K562 (cell line): ENCODE measurements at regions of chr6 and their contacts with region 1.

Region 1: GRCh38 chr6:16128759-16129622 is at the start of gene MYLIP:
- DNase-seq: peak; percentile 99 to 100 (median 100)
- ATAC-seq: peak; percentile 92
- H3K4me3 ChIP-seq: peak within 1 kb of the TSS; percentile 90
- H3K27ac ChIP-seq: peak within 1 kb of the TSS; percentile 92
- H3K4me1 ChIP-seq: peaks cover 20 to 21% of the 10 kb centered on the region in 2 experiments
- H3K27me3 ChIP-seq: no peaks in the 10 kb centered on the region
- CTCF ChIP-seq: peak; percentile 94 to 99 (median 99)
- EP300 ChIP-seq: peak; percentile 50
- POLR2A ChIP-seq: peak; percentile 99
- RAD21 ChIP-seq: peak; percentile 99 to 100
- polyA plus RNA-seq, gene MYLIP: 10.8 to 12.9 TPM

Region 2: GRCh38 chr6:15754035-15754705 is 374.8 kb before region 1 on chr6:
- CTCF ChIA-PET with region 1: interaction called, 3 read pairs
- POLR2A ChIA-PET with region 1: interaction called, 10 read pairs
- in situ Hi-C with region 1: no loop called
- intact Hi-C with region 1: no loop called
- DNase-seq: peak; percentile 20 to 45 (median 34)
- ATAC-seq: peak; percentile 77
- H3K4me3 ChIP-seq: no peak overlapping the region
- H3K27ac ChIP-seq: no peak overlapping the region
- H3K4me1 ChIP-seq: no peaks in the 10 kb centered on the region; a peak in 2 of 5 replicates
- H3K27me3 ChIP-seq: no peaks in the 10 kb centered on the region
- CTCF ChIP-seq: no peak
- EP300 ChIP-seq: no peak
- POLR2A ChIP-seq: no peak
- RAD21 ChIP-seq: no peak

Region 3: GRCh38 chr6:15893556-15894268 is 235.3 kb before region 1 on chr6:
- CTCF ChIA-PET with region 1: interaction called, 12 read pairs
- POLR2A ChIA-PET with region 1: interaction called, 186 read pairs
- in situ Hi-C with region 1: no loop called
- intact Hi-C with region 1: loop called (anchors 1 kb)
- DNase-seq: peak; percentile 61 to 81 (median 70)
- ATAC-seq: 0 out of 3 replicates have a peak, but pooled peaks have one; percentile 9
- H3K4me3 ChIP-seq: no peak overlapping the region
- H3K27ac ChIP-seq: 0 out of 3 replicates have a peak overlapping the region, but pooled peaks have one; percentile 6
- H3K4me1 ChIP-seq: peaks cover 14 to 51% of the 10 kb centered on the region in 2 experiments
- H3K27me3 ChIP-seq: no peaks in the 10 kb centered on the region
- CTCF ChIP-seq: peak; percentile 58 to 85 (median 72); a peak in 5 of 6 replicates
- EP300 ChIP-seq: peak; percentile 26; the same call in 1 of the 2 replicates
- POLR2A ChIP-seq: no peak
- RAD21 ChIP-seq: peak; percentile 77 to 93

Region 4: GRCh38 chr6:15948930-15949900 is 179.8 kb before region 1 on chr6:
- CTCF ChIA-PET with region 1: no interaction called
- POLR2A ChIA-PET with region 1: interaction called, 4 read pairs
- in situ Hi-C with region 1: no loop called
- intact Hi-C with region 1: loop called (anchors 2 kb)
- DNase-seq: peak; percentile 40 to 75 (median 64)
- ATAC-seq: peak; percentile 89
- H3K4me3 ChIP-seq: no peak overlapping the region
- H3K27ac ChIP-seq: no peak overlapping the region
- H3K4me1 ChIP-seq: peaks cover 6 to 22% of the 10 kb centered on the region in 2 experiments; a peak in 4 of 5 replicates
- H3K27me3 ChIP-seq: no peaks in the 10 kb centered on the region
- CTCF ChIP-seq: no peak
- EP300 ChIP-seq: 0 out of 2 replicates have a peak, but pooled peaks have one; percentile 5
- POLR2A ChIP-seq: no peak
- RAD21 ChIP-seq: no peak

Region 5: DNA sequence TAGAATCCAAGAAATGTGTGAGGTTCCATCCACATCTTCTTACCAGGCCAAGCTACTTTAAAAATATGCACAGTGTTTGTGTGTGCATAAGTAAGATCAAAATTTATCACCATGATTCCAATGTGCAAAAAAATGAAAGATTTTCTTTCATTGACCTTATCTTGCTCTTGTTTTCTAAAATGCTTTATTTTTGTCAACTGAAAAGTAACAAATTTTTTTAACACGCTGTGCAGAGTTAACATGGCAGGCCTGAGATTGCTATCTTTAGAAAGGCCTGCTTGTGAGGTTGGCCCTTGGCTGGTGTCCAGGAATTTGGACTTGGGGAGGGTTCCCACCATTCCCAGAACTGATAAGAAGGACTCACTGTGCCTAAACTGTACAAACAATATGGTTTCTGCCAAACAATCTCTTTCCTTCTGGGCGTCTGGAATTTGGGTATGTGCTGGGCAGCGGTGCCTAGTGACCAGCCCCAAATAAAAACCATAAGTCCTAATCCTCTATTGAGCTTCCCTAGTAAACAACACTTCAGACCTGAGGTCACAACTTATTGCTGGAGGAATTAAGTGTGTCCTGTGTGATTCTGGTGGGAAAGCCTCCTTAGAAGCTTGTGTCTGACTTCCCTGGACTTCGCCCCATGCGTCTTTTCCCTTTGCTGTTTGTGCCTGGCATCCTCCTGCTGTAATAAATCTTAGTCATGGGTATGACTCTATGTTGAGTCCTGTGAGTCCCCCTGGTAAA is 19.9 kb before region 1 on chr6:
- CTCF ChIA-PET with region 1: no interaction called
- POLR2A ChIA-PET with region 1: interaction called, 14 read pairs
- in situ Hi-C with region 1: no loop called
- intact Hi-C with region 1: no loop called
- DNase-seq: peak; percentile 60 to 96 (median 68)
- ATAC-seq: peak; percentile 88
- H3K4me3 ChIP-seq: no peak overlapping the region
- H3K27ac ChIP-seq: peak overlapping the region; percentile 63
- H3K4me1 ChIP-seq: peaks cover 16 to 43% of the 10 kb centered on the region in 2 experiments
- H3K27me3 ChIP-seq: no peaks in the 10 kb centered on the region
- CTCF ChIP-seq: no peak
- EP300 ChIP-seq: peak; percentile 75
- POLR2A ChIP-seq: no peak
- RAD21 ChIP-seq: 0 out of 4 replicates have a peak, but pooled peaks have one; percentile 18

Region 6: DNA sequence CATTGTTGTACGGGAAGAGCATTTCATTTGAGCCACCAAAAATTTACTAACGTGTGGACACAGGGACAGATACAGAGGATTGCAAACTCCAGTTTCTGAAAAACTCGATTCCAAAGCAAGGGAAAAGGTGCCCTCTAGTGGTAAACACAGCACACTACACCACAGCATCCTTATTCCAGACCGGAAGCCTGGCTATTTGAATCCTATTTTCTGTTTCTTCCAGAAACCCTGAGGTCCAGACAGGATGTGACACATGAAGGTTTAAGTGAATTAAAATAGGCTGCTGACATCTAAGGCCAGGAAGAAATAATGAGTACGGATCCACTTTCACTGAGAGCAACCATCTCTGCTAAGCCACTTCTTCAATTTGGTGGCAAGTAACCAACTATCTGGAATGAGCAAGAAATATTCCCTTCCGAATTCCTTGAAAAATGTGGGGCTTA is 77.6 kb after region 1 on chr6:
- CTCF ChIA-PET with region 1: no interaction called
- POLR2A ChIA-PET with region 1: interaction called, 9 read pairs
- in situ Hi-C with region 1: no loop called
- intact Hi-C with region 1: loop called (anchors 2 kb)
- DNase-seq: peak; percentile 79 to 84 (median 79)
- ATAC-seq: peak; percentile 88
- H3K4me3 ChIP-seq: no peak overlapping the region
- H3K27ac ChIP-seq: no peak overlapping the region; the same call in 1 of the 3 replicates
- H3K4me1 ChIP-seq: peaks cover 8 to 14% of the 10 kb centered on the region in 2 experiments; a peak in 4 of 5 replicates
- H3K27me3 ChIP-seq: no peaks in the 10 kb centered on the region
- CTCF ChIP-seq: peak; percentile 88 to 98 (median 96)
- EP300 ChIP-seq: no peak; the same call in 1 of the 2 replicates
- POLR2A ChIP-seq: no peak
- RAD21 ChIP-seq: peak; percentile 97